CD4-positive, alpha-beta T cell (primary cell): ENCODE measurements at regions of chr22 and their contacts with region 1.

Region 1: GRCh38 chr22:29587938-29588699 is 7.2 kb upstream of the NIPSNAP1 start:
- DNase-seq: peak in 1 of 14 experiments; percentile 31
- ATAC-seq: no peak
- H3K4me3 ChIP-seq: no peak overlapping the region
- H3K4me3 Mint-ChIP-seq: no peak overlapping the region
- H3K27ac ChIP-seq: no peak overlapping the region
- H3K27ac Mint-ChIP-seq: no peak overlapping the region
- H3K4me1 ChIP-seq: peaks cover 12% of the 10 kb centered on the region
- H3K4me1 Mint-ChIP-seq: peaks cover 11% of the 10 kb centered on the region
- H3K27me3 ChIP-seq: no peaks in the 10 kb centered on the region
- H3K27me3 Mint-ChIP-seq: no peaks in the 10 kb centered on the region
- CTCF ChIP-seq: no peak

Region 2: GRCh38 chr22:29625090-29625825 is 37.1 kb after region 1 on chr22:
- CTCF ChIA-PET with region 1: interaction called, 12 read pairs
- POLR2A ChIA-PET with region 1: no interaction called
- intact Hi-C with region 1: no loop called
- DNase-seq: peak in 8 of 14 experiments; percentile 9 to 73 (median 40)
- ATAC-seq: peak; percentile 51
- H3K4me3 ChIP-seq: no peak overlapping the region
- H3K4me3 Mint-ChIP-seq: no peak overlapping the region
- H3K27ac ChIP-seq: no peak overlapping the region
- H3K27ac Mint-ChIP-seq: peak overlapping the region; percentile 81
- H3K4me1 ChIP-seq: peaks cover 28% of the 10 kb centered on the region
- H3K4me1 Mint-ChIP-seq: peaks cover 76% of the 10 kb centered on the region
- H3K27me3 ChIP-seq: no peaks in the 10 kb centered on the region
- H3K27me3 Mint-ChIP-seq: no peaks in the 10 kb centered on the region
- CTCF ChIP-seq: peak; percentile 93

Region 3: DNA sequence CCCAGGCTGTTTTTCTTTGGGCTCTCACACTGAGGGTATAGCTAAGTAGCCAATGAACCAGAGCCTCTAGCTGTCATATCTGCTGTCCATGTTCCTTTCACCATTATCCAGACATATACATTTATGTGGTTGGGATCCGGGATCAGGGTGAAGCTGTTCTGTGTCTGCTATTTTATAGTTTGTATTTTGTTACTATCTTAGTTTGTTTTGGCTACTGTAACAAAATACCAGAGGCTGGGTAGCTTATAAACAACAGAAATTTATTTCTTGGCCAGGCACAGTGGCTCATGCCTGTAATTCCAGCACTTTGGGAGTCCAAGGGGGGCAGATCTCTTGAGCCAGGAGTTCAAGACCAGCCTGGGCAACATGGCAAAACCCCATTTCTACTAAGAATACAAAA is 91.2 kb after region 1 on chr22:
- CTCF ChIA-PET with region 1: no interaction called
- POLR2A ChIA-PET with region 1: no interaction called
- intact Hi-C with region 1: no loop called
- DNase-seq: no peak
- ATAC-seq: no peak
- H3K4me3 ChIP-seq: no peak overlapping the region
- H3K4me3 Mint-ChIP-seq: no peak overlapping the region
- H3K27ac ChIP-seq: no peak overlapping the region
- H3K27ac Mint-ChIP-seq: no peak overlapping the region
- H3K4me1 ChIP-seq: no peaks in the 10 kb centered on the region
- H3K4me1 Mint-ChIP-seq: no peaks in the 10 kb centered on the region
- H3K27me3 ChIP-seq: no peaks in the 10 kb centered on the region
- H3K27me3 Mint-ChIP-seq: no peaks in the 10 kb centered on the region
- CTCF ChIP-seq: no peak

Region 4: DNA sequence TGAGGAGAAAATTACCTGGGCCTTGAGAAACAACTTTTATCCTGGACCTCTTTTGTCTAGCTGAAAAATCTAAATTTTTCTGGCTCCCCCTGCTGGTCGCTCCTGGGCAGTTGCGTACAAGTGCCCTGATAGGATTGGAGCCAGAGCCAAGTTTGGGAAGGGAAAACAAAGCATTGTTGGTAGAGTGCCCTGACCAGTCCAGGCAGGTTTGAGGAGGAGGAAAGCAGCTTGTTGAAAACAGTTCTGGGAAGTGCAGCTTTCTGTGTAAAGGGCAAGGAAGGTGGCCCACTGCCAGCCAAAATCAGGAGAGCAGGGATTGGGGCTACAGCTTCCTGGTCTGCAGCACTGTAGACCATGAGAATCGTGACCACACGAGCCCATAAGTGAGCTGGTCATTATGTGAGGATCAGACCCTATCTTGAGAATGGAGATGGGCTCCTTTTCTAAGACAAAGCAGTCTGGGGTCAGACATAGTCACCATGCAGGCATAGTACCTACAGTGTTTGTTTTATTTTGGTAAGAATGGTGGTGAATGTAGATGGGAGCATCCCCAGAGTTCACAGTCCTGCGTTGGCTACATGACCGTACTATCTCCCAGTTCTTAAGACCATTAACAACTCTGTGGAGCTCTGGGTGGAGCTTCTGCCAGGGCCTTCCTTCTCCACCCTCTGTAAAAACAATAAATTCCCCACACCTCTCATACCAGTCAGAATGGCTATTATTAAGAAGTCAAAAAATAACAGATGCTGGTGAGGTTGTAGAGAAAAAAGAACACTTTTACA is 1725.4 kb after region 1 on chr22:
- CTCF ChIA-PET with region 1: no interaction called
- POLR2A ChIA-PET with region 1: no interaction called
- intact Hi-C with region 1: no loop called
- DNase-seq: peak; percentile 41 to 86 (median 64)
- ATAC-seq: peak; percentile 79
- H3K4me3 ChIP-seq: no peak overlapping the region
- H3K4me3 Mint-ChIP-seq: no peak overlapping the region
- H3K27ac ChIP-seq: no peak overlapping the region
- H3K27ac Mint-ChIP-seq: no peak overlapping the region
- H3K4me1 ChIP-seq: peaks cover 15% of the 10 kb centered on the region
- H3K4me1 Mint-ChIP-seq: peaks cover 29% of the 10 kb centered on the region
- H3K27me3 ChIP-seq: no peaks in the 10 kb centered on the region
- H3K27me3 Mint-ChIP-seq: no peaks in the 10 kb centered on the region
- CTCF ChIP-seq: peak; percentile 90